CD14-positive monocyte (primary cell): ENCODE measurements at regions of chr11 and their contacts with region 1.

Region 1: DNA sequence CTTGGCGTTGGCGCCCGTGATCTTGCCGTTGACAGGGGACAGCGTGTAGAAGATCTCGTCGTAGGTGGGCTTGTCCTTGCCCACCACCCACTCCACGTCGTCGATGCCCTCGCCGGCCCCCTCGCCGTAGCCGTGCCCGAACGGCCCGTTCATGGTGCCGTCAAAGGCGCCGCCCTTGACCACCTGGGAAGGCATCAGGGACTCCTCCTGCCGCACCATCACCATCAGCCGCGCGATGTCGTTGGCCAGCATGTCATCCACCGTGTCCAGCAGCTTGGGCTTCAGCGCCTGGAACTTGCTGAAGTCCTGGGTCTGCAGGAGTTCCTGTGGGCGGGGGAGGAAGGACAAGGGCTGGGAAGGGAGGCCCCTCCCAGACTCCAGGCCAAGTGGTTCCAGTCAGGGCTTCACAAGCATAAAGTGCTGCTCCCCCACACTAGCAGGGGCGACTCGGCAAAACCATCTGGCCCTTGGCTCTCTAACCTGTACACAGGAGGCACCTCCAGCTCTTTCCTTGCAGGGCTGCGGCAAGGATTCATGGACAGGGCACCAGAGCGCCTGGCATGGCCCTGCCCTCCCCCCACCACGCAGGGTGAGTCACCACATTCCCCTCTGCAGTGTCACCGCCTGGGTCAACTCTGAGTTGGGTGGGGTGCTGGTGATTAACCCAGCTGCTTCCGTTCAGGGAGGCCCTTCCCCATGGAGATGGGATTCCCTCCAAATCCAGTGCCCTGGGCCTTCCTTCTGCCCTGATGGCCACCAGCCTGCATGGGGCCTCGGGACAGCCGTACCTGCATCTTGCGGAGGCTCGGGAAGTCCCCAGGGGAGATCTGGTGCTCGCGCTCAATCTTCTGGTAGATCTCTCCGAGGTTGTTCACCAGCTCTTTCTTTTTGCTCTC is 10.3 kb upstream of the CDC42BPG start:
- DNase-seq: peak; percentile 91 to 95 (median 92)
- H3K4me3 ChIP-seq: peak overlapping the region in 1 of 3 experiments; percentile 47
- H3K4me3 Mint-ChIP-seq: peak overlapping the region; percentile 58 to 73
- H3K27ac ChIP-seq: peak overlapping the region; percentile 52 to 85
- H3K27ac Mint-ChIP-seq: peak overlapping the region; percentile 83 to 97 (median 90)
- H3K4me1 ChIP-seq: peaks cover 89 to 91% of the 10 kb centered on the region in 2 donors
- H3K4me1 Mint-ChIP-seq: peaks cover 88% of the 10 kb centered on the region
- H3K27me3 ChIP-seq: no peaks in the 10 kb centered on the region
- H3K27me3 Mint-ChIP-seq: peaks cover 3 to 10% (median 3%) of the 10 kb centered on the region in 3 donors
- CTCF ChIP-seq: no peak

Region 2: GRCh38 chr11:64870176-64870892 is 15.6 kb after region 1 on chr11:
- intact Hi-C with region 1: loop called in 1 of 2 experiments (anchors 2 kb)
- DNase-seq: peak; percentile 81 to 96 (median 85)
- H3K4me3 ChIP-seq: peak overlapping the region in 1 of 3 experiments; percentile 59
- H3K4me3 Mint-ChIP-seq: peak overlapping the region; percentile 71 to 76
- H3K27ac ChIP-seq: peak overlapping the region; percentile 67 to 83
- H3K27ac Mint-ChIP-seq: peak overlapping the region; percentile 89 to 95 (median 92)
- H3K4me1 ChIP-seq: peaks cover 61 to 85% of the 10 kb centered on the region in 2 donors
- H3K4me1 Mint-ChIP-seq: peaks cover 83% of the 10 kb centered on the region
- H3K27me3 ChIP-seq: no peaks in the 10 kb centered on the region
- H3K27me3 Mint-ChIP-seq: peaks cover 0 to 7% (median 3%) of the 10 kb centered on the region in 3 donors
- CTCF ChIP-seq: no peak

Region 3: DNA sequence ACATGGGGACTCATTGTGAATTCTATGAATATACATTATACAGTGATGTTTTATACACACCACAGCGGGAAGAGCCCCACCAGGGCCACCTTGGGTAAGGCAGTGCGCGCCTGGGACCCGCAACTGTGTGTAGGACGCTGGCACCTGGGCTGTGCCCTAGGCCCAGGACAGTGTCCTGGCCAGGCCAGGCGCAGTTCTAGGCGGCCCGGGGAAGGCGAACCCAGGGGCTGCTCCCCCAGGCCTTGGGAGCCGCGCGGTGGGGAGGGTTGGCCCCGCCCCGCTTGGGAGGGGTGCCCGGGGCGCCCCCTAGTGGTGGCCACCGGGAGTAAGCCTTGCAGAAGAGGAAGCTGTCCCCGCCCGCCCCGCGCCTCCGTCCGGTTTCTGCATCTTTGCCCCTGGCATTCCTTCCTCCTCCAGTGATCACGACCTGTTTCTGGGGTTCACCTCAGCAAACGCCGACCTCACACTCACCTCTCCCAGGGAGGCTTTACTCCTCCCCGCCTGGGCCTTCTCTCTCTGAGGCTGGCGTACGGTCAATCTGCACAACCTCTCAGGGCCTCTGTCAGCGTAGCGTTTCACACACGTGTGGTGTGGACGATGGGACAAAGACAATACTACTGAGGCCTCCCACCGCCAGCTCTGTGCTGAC is 33.1 kb after region 1 on chr11:
- intact Hi-C with region 1: loop called in 1 of 2 experiments (anchors 2 kb)
- DNase-seq: peak; percentile 78 to 85 (median 79)
- H3K4me3 ChIP-seq: peak overlapping the region in 1 of 3 experiments; percentile 67
- H3K4me3 Mint-ChIP-seq: peak overlapping the region; percentile 77 to 88
- H3K27ac ChIP-seq: peak overlapping the region in 1 of 2 donors; percentile 58
- H3K27ac Mint-ChIP-seq: peak overlapping the region; percentile 72 to 94 (median 85)
- H3K4me1 ChIP-seq: peaks cover 43 to 47% of the 10 kb centered on the region in 2 donors
- H3K4me1 Mint-ChIP-seq: peaks cover 47% of the 10 kb centered on the region
- H3K27me3 ChIP-seq: peaks cover 0 to 7% of the 10 kb centered on the region in 2 donors
- H3K27me3 Mint-ChIP-seq: peaks cover 4 to 13% (median 13%) of the 10 kb centered on the region in 3 donors
- CTCF ChIP-seq: peak; percentile 99

Region 4: GRCh38 chr11:64947208-64947814 is 92.5 kb after region 1 on chr11:
- intact Hi-C with region 1: no loop called
- DNase-seq: peak in 2 of 3 donors; percentile 5 to 24
- H3K4me3 ChIP-seq: no peak overlapping the region
- H3K4me3 Mint-ChIP-seq: no peak overlapping the region
- H3K27ac ChIP-seq: no peak overlapping the region
- H3K27ac Mint-ChIP-seq: peak overlapping the region in 2 of 7 donors; percentile 45 to 75
- H3K4me1 ChIP-seq: no peaks in the 10 kb centered on the region
- H3K4me1 Mint-ChIP-seq: peaks cover 3% of the 10 kb centered on the region
- H3K27me3 ChIP-seq: peaks cover 3 to 4% of the 10 kb centered on the region in 2 donors
- H3K27me3 Mint-ChIP-seq: peaks cover 12 to 26% (median 16%) of the 10 kb centered on the region in 3 donors
- CTCF ChIP-seq: no peak